Ovary (tissue), 10 donors: ENCODE measurements at regions of chr14 and their contacts with region 1.

Region 1: DNA sequence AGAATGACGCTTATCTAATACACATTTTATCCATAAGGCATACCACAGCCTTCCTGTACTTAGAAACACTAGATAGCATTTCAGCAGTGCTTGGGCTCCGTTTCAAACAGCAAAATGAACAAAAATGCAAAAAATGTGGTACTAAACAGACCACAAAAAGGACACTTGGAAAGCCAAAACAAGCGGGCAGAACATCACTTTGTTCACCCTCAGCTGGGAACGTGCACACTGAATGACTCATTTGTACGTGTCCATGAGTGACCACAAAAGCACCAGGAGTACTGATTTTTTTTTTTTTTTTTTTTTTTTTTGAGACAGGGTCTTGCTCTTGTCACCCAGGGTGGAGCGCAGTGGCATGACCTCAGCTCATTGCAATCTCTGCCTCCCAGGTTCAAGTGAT is 8.9 kb upstream of the FOXN3 start:
- DNase-seq: no peak
- H3K4me3 ChIP-seq: no peak overlapping the region
- H3K27ac ChIP-seq: no peak overlapping the region
- H3K4me1 ChIP-seq: peaks cover 24% of the 10 kb centered on the region
- H3K27me3 ChIP-seq: no peaks in the 10 kb centered on the region
- CTCF ChIP-seq: no peak
- EP300 ChIP-seq: no peak
- POLR2A ChIP-seq: no peak

Region 2: GRCh38 chr14:89033756-89034155 is 392.2 kb before region 1 on chr14:
- intact Hi-C with region 1: loop called in 1 of 4 experiments (anchors 10 kb)
- DNase-seq: no peak
- H3K4me3 ChIP-seq: no peak overlapping the region
- H3K27ac ChIP-seq: no peak overlapping the region
- H3K4me1 ChIP-seq: no peaks in the 10 kb centered on the region
- H3K27me3 ChIP-seq: no peaks in the 10 kb centered on the region
- CTCF ChIP-seq: no peak
- EP300 ChIP-seq: no peak
- POLR2A ChIP-seq: no peak

Region 3: DNA sequence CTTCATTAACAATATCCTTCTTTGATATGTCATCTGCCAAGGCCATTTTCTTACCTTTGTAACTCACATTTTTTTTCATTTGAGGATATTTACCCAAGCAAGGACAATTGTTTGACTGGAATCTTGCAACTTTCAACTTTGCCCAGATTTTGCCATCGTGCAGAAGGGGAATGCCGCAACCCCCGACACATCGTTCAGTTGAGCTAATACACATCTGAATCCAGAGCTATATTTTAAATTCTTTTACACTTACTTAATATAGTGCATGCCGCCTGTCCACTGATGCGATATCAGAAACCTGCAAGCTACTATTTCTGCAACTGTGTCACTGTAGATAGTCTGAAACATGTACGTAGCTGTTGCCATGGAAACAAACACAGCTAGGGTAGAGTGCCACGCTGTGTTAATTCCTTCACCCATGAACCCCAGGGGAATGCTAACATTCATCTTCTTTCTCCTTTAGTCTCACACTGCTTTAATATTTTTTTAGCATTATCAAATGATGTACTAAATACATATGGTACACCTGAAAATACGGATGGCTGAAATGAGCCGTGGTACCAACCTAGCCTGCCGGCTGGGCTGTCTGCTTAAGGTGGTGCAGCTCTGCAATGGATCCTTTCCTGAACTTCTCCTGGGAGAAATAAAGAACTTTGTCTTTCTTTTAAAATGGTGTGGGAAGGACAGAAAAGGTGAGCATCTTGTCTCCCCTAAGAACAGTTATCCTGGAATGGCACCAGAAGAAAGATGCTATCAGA is 68.1 kb after region 1 on chr14:
- intact Hi-C with region 1: loop called in 2 of 4 experiments (anchors 5 to 10 kb)
- DNase-seq: no peak
- H3K4me3 ChIP-seq: no peak overlapping the region
- H3K27ac ChIP-seq: no peak overlapping the region
- H3K4me1 ChIP-seq: peaks cover 9% of the 10 kb centered on the region
- H3K27me3 ChIP-seq: no peaks in the 10 kb centered on the region
- CTCF ChIP-seq: no peak
- EP300 ChIP-seq: no peak
- POLR2A ChIP-seq: no peak

Region 4: DNA sequence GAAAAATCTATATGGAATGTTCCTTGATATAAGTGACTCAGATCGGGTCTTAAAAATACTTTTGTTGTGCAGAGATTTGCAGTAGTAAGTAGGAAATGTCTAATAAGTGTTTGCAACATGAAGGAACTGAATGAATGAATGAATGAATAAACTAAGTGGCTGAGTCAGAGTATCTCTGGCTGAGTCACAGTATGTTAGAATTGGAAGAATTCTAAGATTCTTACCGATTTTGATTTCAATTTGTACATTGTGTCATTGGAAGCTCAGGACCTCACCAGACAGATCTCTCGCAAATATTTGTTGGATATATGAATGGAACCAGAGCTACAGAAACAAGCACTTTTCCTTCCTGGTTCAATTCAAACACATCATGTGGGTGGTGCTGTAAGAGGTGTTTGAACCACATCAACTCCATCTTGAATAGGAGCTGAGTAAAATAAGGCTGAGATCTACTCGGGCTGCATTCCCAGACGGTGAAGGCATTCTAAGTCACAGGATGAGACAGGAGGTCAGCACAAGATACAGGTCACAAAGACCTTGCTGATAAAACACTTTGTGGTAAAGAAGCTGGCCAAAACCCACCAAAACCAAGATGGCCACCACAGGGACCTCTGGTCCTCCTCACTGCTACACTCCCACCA is 115.0 kb after region 1 on chr14:
- intact Hi-C with region 1: loop called in 1 of 4 experiments (anchors 10 kb)
- DNase-seq: no peak
- H3K4me3 ChIP-seq: no peak overlapping the region
- H3K27ac ChIP-seq: no peak overlapping the region
- H3K4me1 ChIP-seq: peaks cover 5% of the 10 kb centered on the region
- H3K27me3 ChIP-seq: no peaks in the 10 kb centered on the region
- CTCF ChIP-seq: no peak
- EP300 ChIP-seq: no peak
- POLR2A ChIP-seq: no peak